ENCODE measurements at regions of chr16 and their contacts with region 1.

Region 1: DNA sequence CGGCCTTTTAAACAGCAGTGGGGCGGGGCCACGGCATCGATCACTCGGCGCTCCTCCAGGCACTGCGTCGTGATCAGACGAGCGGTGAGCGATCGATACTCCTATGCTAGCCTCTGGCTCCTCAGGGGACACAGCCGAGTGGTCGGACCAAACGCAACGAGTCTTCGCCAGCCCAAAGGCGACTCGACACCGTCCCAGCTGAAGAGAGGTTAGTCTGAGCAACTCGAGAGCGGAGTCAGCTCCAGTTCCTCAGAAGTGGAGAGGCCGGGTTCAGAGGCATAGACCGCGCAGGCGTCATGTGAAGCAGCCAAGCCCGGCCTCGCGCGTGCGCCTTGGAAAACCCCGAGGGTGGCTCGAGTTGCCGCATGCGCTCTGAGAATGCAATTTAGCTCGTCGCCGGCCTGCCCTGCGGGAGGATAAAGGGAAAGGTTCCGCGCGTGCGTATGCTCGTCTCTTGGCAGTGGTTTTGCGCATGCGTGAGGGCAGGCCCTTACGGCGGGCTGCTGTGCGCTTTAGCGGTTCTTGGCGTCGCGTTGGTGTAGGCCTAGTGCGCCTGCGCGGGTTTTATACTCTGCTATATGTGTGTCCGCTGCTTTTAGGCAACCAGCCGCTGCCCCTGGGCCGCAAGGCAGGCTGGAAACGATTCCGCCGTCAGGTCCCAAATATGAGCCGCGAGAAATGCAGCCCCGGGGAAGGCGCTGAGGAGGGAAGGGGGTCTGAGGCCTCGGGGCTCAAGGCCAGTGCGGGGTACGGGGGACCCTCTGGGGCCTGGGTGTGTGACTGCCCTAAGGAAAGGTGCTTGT is at the start of gene KDM8:
- DNase-seq: peak; percentile 100
- ATAC-seq: peak; percentile 94
- H3K4me3 Mint-ChIP-seq: peak within 1 kb of the TSS; percentile 95
- H3K27ac Mint-ChIP-seq: peak within 1 kb of the TSS; percentile 100
- H3K4me1 Mint-ChIP-seq: peaks cover 48% of the 10 kb centered on the region
- H3K27me3 Mint-ChIP-seq: no peaks in the 10 kb centered on the region
- total RNA-seq, gene KDM8: 14.8 to 18.2 TPM

Region 2: GRCh38 chr16:27169511-27170071 is 34.0 kb before region 1 on chr16:
- CTCF ChIA-PET with region 1: interaction called, 11 read pairs
- DNase-seq: peak; percentile 87
- ATAC-seq: peak; percentile 86
- H3K4me3 Mint-ChIP-seq: peak overlapping the region; percentile 59
- H3K27ac Mint-ChIP-seq: peak overlapping the region; percentile 82
- H3K4me1 Mint-ChIP-seq: peaks cover 45% of the 10 kb centered on the region
- H3K27me3 Mint-ChIP-seq: no peaks in the 10 kb centered on the region

Measured in activated CD8-positive, alpha-beta memory T cell treated with anti-CD3 and anti-CD28 coated beads, Interleukin-2, amount 10 ng/mL, durations not matched to agents 7 days and 5 days (primary cell).